A549 (cell line): ENCODE measurements at regions of chr17 and their contacts with region 1.

Region 1: DNA sequence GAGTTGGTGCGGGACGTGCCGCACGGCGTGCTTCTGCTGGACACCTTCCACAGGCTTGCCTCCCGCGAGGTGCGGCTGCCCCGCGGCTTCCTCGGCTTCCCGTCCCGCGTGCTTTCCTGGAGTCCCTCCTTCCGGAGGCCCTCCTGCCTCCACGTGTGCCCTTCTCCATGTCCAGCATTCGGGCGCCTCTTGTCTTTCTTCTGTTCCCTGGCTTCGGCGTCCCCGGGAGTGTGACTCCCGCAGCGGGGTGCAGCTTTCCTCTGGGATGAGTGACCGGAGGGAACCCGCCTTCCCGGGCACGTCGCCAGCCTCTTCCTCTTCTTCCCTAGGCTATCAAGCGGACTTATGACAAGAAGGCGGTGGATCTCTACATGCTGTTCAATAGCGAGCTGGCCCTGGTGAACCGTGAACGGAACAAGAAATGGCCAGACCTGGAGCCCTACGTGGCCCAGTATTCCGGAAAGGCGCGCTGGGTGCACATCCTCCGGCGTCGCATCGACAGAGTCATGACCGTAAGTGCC is 23.0 kb downstream of the DNAH2 start:
- DNase-seq: no peak
- ATAC-seq: no peak
- H3K4me3 ChIP-seq: no peak overlapping the region
- H3K27ac ChIP-seq: no peak overlapping the region
- H3K4me1 ChIP-seq: peaks cover 3% of the 10 kb centered on the region
- CTCF ChIP-seq: no peak
- EP300 ChIP-seq: no peak
- POLR2A ChIP-seq: no peak
- RAD21 ChIP-seq: no peak

Region 2: GRCh38 chr17:7767405-7768021 is 27.0 kb after region 1 on chr17:
- CTCF ChIA-PET with region 1: interaction called, 22 read pairs
- POLR2A ChIA-PET with region 1: no interaction called
- DNase-seq: no peak
- ATAC-seq: peak; percentile 27 to 48; a peak in 4 of 6 replicates
- H3K4me3 ChIP-seq: no peak overlapping the region
- H3K27ac ChIP-seq: no peak overlapping the region
- H3K4me1 ChIP-seq: no peaks in the 10 kb centered on the region
- CTCF ChIP-seq: no peak
- EP300 ChIP-seq: no peak
- POLR2A ChIP-seq: no peak
- RAD21 ChIP-seq: no peak

Region 3: DNA sequence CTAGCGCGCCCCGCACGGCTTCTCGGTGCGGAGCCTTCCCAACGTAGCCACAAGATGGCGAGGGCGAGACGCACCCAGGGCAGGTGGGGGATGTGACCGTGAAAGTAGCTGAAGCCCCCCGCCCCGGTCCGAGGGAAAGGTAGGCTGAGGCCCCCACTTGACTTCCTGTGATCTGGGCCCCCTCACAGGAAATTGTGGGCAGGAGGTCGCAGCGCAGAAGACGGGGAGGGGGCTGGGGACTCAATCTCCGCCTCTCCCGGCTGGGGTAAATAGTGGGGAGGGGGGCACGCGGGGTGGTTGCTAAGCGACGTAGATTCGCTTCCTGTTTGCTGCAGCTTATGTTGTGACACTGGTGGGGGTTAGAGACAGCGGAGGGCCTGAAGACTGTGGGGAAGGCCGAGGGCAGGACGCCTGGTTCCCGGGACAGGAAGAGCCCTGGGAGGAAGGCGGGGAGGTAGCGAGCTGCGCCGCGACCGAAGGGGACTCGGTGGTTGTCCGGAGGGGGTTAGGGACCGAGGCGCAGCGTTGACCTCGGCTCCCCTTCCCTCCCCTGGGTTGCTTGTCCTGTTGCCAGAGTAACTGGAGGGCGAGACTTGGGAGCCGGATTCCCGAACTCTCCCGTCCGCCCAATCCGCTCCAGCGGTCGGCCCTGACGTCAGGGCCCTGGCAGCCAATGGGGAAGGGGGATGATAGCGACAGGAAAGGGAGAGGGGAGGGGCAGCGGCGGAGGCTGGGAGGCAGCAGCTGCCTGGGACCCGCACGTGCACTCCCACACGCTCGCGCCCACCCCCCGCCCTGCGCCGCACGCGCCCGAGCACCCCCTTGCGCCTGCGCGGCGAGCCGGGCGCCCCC is 94.6 kb after region 1 on chr17:
- CTCF ChIA-PET with region 1: interaction called, 82 read pairs
- POLR2A ChIA-PET with region 1: no interaction called
- DNase-seq: peak; percentile 99
- ATAC-seq: peak; percentile 58 to 73
- H3K4me3 ChIP-seq: peak overlapping the region; percentile 60
- H3K27ac ChIP-seq: peak overlapping the region; percentile 82 to 89
- H3K4me1 ChIP-seq: peaks cover 36% of the 10 kb centered on the region
- CTCF ChIP-seq: peak; percentile 87
- EP300 ChIP-seq: no peak
- POLR2A ChIP-seq: peak; percentile 39
- RAD21 ChIP-seq: peak; percentile 83 to 88

Region 4: DNA sequence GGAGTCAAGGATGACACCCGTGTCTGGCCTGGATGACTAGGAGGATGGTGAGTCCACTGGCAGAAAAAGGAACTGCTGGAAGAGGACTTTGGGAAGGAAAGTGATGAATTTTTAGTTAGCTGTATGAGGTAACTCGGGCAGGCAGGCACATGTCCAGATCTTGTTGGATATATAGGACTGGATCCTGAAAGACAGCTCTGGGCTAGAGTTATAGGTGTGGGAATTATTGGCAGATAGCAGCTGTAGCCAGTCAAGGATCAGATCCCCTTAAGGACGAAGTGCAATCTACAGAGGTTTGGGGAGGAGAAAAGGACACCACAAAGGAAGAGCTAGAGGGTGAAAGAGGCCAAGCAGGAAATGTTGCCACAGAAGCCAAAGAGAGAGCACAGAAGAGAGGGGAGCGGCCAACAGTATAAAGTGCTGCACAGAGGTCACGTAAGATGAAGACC is 127.4 kb after region 1 on chr17:
- CTCF ChIA-PET with region 1: interaction called, 23 read pairs
- POLR2A ChIA-PET with region 1: no interaction called
- DNase-seq: no peak
- ATAC-seq: no peak
- H3K4me3 ChIP-seq: no peak overlapping the region
- H3K27ac ChIP-seq: no peak overlapping the region
- H3K4me1 ChIP-seq: peaks cover 5% of the 10 kb centered on the region; the same call in 1 of the 3 replicates
- CTCF ChIP-seq: no peak
- EP300 ChIP-seq: no peak
- POLR2A ChIP-seq: no peak
- RAD21 ChIP-seq: no peak